Activated CD4-positive, alpha-beta memory T cell treated with anti-CD3 and anti-CD28 coated beads, Interleukin-2, amount 10 ng/mL, durations not matched to agents 7 days and 5 days (primary cell): ENCODE measurements at regions of chr14 and their contacts with region 1.

Region 1: DNA sequence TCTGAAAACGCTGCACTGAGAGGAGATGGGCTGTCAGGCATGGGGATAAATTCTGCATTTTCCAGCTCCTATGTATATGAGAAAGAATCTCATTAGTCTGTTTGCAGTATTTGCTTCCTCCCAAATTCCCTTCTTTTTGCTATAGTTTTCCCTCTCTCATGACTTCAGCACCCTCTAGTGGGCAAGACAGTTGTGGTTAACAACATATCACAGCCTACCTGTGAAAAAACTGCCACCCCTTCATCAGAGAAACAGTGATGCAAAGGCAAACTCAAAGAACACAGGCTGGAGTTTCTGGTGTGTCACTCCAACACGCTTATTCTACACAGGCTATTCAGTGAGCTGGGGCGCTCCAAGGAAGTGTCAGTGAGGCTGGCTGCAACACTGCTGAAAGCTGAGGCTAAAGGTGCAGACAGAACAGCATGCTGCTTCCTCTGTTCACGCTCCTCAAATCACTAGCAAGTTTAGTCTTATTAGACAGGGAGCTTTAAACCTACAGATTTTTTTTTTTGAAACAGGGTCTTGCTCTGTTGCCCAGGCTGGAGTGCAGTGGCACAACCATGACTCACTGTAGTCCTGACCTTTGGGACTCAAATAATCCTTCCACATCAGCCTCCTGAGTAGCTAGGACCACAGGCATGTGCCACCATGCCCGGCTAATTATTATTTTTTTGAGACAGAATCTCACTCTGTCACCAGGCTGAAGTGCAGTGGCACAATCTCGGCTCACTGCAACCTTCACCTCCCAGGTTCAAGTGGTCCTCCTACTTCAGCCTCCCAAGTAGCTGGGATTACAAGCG is 19.3 kb downstream of the ZC2HC1C start:
- DNase-seq: peak; percentile 35
- H3K4me3 Mint-ChIP-seq: no peak overlapping the region
- H3K27ac Mint-ChIP-seq: no peak overlapping the region
- H3K4me1 Mint-ChIP-seq: no peaks in the 10 kb centered on the region
- H3K27me3 Mint-ChIP-seq: no peaks in the 10 kb centered on the region

Region 2: DNA sequence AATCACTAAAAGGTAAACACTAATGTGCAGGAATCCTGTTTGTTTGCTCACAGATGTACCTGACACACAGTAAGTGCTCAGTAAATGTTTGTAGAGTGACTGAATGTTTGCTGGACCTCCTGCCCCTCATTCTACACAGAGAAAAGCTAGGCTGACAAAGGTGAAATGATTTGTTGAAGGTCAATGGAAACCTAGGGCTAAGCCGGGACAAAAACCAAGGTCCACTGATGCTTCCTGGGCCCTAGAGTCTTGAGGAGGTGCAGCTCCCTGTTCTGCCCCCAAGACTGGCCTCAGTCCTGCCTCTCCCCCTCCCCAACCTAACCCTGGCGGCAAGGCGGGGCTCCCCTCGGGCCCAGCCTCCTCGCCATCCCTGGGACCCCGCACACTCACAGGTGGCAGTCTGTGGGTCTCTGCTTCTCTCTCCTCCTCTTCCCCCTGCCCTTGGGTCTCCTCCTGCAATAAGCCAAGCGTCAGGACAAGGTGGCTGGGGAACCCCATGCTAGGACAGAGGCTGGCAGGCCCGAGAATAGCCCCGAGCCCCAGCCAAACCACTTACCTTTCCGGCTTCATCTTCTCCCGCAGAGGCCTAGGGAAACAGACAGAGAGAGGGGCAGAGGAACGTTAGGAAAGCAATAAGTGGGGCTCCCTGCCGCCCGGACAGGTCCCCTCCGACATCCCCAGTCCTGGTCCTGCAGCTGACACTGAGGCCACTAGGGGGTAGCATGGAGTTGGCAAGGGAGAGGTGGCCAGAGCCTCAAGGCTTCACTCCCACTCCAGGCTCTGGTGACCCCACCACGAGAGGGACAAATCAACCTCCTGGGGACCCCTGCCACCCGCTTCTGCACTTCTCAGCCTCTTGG is 142.7 kb before region 1 on chr14:
- CTCF ChIA-PET with region 1: interaction called, 80 read pairs
- POLR2A ChIA-PET with region 1: no interaction called
- DNase-seq: peak; percentile 79
- H3K4me3 Mint-ChIP-seq: peak overlapping the region; percentile 2
- H3K27ac Mint-ChIP-seq: no peak overlapping the region
- H3K4me1 Mint-ChIP-seq: peaks cover 33% of the 10 kb centered on the region
- H3K27me3 Mint-ChIP-seq: no peaks in the 10 kb centered on the region

Region 3: GRCh38 chr14:75022655-75023054 is 66.1 kb before region 1 on chr14:
- CTCF ChIA-PET with region 1: interaction called, 14 read pairs
- POLR2A ChIA-PET with region 1: no interaction called
- DNase-seq: no peak
- H3K4me3 Mint-ChIP-seq: no peak overlapping the region
- H3K27ac Mint-ChIP-seq: no peak overlapping the region
- H3K4me1 Mint-ChIP-seq: no peaks in the 10 kb centered on the region
- H3K27me3 Mint-ChIP-seq: no peaks in the 10 kb centered on the region

Region 4: GRCh38 chr14:75063407-75064213 is 25.2 kb before region 1 on chr14 and contains the start of gene ACYP1:
- CTCF ChIA-PET with region 1: interaction called, 16 read pairs
- POLR2A ChIA-PET with region 1: no interaction called
- DNase-seq: peak; percentile 93
- H3K4me3 Mint-ChIP-seq: peak within 1 kb of the TSS; percentile 99
- H3K27ac Mint-ChIP-seq: peak within 1 kb of the TSS; percentile 92
- H3K4me1 Mint-ChIP-seq: peaks cover 42% of the 10 kb centered on the region
- H3K27me3 Mint-ChIP-seq: no peaks in the 10 kb centered on the region
- total RNA-seq, gene ACYP1: 52.7 to 53.8 TPM

Region 5: GRCh38 chr14:75077794-75078193 is 11.0 kb before region 1 on chr14:
- CTCF ChIA-PET with region 1: interaction called, 16 read pairs
- POLR2A ChIA-PET with region 1: interaction called, 3 read pairs
- DNase-seq: no peak
- H3K4me3 Mint-ChIP-seq: no peak overlapping the region
- H3K27ac Mint-ChIP-seq: no peak overlapping the region
- H3K4me1 Mint-ChIP-seq: no peaks in the 10 kb centered on the region
- H3K27me3 Mint-ChIP-seq: no peaks in the 10 kb centered on the region

Region 6: GRCh38 chr14:75132382-75133086 is 43.8 kb after region 1 on chr14:
- CTCF ChIA-PET with region 1: no interaction called
- POLR2A ChIA-PET with region 1: no interaction called
- DNase-seq: peak; percentile 43
- H3K4me3 Mint-ChIP-seq: no peak overlapping the region
- H3K27ac Mint-ChIP-seq: no peak overlapping the region
- H3K4me1 Mint-ChIP-seq: peaks cover 21% of the 10 kb centered on the region
- H3K27me3 Mint-ChIP-seq: no peaks in the 10 kb centered on the region